ENCODE measurements at regions of chr6 and their contacts with region 1.

Region 1: GRCh38 chr6:149028767-149029405 is 282.1 kb downstream of the UST start:
- H3K4me3 ChIP-seq: no peak overlapping the region
- H3K27ac ChIP-seq: no peak overlapping the region
- H3K4me1 ChIP-seq: peaks cover 14% of the 10 kb centered on the region
- CTCF ChIP-seq: peak; percentile 19; the same call in 1 of the 2 replicates

Region 2: DNA sequence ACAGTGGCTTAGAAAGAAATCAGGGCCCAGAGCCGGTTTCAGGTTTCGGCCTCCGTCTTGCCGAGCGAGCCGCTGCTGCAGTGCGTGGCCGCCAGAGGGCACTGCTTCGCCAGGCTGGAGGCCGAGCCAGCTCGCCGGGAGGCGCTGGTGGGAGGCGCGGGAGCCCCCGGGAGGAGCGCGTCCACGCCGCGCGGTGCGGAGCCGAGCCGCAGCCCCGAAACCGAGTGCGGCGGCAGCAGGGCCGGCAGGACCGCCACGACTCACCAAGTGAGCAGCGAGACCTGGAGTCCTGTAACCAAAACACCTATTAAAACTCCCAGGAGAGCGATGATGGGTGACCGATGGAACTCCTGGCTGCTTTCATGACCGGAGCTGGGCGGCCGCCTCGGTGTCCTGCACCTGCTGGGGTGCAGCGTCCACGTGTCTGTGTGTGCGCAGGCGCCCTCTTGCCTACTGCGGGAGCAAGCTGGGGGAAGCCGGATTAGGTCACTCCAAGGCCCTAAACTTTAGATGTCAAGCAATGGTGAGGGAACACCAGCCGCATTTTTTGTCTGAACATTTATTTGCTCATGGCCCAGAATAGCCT is 468.9 kb before region 1 on chr6:
- CTCF ChIA-PET with region 1: interaction called, 43 read pairs
- POLR2A ChIA-PET with region 1: no interaction called
- H3K4me3 ChIP-seq: peak overlapping the region; percentile 49
- H3K27ac ChIP-seq: peak overlapping the region; percentile 29; the same call in 1 of the 2 replicates
- H3K4me1 ChIP-seq: no peaks in the 10 kb centered on the region
- CTCF ChIP-seq: peak; percentile 69

Region 3: DNA sequence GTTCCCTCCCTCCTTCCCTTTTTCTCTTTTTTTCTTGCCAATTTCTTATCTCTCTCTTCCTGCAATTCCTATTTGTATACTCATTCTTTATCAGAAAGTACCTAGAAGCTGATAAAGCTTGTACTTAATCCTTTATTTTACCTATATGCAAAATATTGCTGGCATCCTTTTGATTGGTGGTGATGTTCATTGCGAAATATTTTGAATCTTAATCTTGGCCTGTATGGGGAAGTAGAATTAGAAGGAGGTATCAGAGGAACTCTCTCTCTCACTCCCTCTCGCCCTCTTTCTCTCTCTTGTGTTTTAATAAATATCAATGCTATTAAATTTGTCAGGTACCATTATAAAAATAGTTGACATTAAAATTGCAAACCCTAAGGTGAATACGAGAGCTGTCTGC is 229.2 kb before region 1 on chr6:
- CTCF ChIA-PET with region 1: no interaction called
- POLR2A ChIA-PET with region 1: no interaction called
- H3K4me3 ChIP-seq: no peak overlapping the region
- H3K27ac ChIP-seq: no peak overlapping the region
- H3K4me1 ChIP-seq: peaks cover 3% of the 10 kb centered on the region; the same call in 1 of the 2 replicates
- CTCF ChIP-seq: no peak

Region 4: GRCh38 chr6:148965287-148965686 is 63.6 kb before region 1 on chr6:
- CTCF ChIA-PET with region 1: no interaction called
- POLR2A ChIA-PET with region 1: no interaction called
- H3K4me3 ChIP-seq: no peak overlapping the region
- H3K27ac ChIP-seq: no peak overlapping the region
- H3K4me1 ChIP-seq: peaks cover 10% of the 10 kb centered on the region
- CTCF ChIP-seq: no peak

Region 5: DNA sequence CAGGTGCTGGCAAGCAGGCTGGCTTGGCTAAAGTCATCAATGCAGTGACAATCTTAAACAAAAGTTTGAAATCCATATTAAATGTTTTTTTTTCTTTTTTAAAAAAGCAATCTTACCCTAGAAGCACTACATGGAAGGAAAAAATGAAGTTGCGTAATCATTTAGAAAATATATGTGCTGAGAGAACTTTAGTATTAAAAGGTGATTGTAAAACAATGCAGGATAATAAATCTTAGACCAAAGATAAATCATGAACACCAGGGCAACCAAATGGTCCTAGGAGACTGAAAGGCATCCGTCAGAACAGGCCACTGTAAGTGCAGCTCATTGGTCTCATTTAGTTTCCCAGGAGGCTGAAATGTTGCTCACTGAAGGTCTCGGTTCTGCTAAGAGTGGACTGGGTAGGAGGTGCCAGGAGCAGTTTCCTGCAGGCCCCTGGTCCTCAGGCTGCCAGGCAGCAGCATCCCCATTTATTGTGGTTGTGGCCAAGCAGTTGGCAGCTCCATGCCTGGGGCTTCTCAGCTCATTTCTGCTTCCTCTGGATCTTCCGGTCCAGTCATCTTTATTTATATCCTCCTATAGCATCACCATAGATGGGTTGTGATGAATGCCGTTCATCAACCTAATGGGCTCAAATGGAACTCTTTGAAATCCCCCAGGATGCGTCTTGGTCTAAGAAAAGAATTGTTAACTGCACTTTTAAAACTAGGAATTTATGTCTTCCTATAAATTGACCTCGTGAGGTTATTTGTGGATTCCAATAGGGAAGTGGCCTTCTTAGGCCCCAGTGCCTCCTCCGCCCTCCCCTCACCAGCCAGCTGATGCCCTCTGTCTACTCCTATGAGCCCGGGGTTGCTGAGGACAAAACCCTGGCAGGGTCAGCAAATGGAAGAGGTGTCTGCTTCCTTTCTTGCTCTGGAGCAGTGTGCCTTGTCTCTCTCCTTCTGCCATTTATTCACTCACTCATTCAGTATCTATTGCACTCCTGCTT is 13.1 kb before region 1 on chr6:
- CTCF ChIA-PET with region 1: interaction called, 20 read pairs
- POLR2A ChIA-PET with region 1: no interaction called
- H3K4me3 ChIP-seq: no peak overlapping the region
- H3K27ac ChIP-seq: no peak overlapping the region
- H3K4me1 ChIP-seq: no peaks in the 10 kb centered on the region
- CTCF ChIP-seq: no peak

Region 6: DNA sequence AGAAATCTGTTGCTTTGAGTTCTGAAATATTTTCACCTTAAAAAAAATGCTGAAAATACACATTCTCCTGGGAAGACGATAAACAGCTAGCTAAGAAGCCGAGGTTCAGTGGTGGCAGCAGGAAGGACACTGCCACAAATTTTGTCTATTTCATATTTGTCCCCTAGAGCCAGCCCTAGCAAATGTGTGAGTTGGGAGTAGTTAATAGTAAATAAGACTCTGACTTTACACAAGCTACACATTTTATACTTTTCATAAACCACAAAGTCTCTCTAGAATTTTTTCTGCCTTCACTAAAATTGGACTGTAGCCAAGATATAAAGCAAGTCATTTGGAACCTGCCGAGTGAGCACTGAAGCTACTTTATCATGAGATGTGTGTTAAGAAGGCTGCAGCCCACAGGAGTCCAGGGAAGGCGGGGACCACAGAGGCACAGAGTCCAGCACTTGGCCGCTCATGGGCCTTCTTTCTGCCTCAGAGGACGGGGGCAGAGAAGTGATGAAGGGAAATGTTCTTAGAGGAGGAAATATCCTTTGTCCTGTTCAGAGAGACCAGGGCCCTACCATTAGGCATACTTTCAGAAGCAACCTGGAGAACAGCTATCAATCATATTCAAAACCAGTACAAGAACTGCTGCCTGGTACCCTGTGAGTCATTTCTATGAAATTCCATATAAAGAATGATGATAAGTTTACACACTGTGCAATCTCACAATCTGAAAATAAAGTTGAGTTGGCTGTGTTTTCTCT is 46.9 kb after region 1 on chr6:
- CTCF ChIA-PET with region 1: interaction called, 14 read pairs
- POLR2A ChIA-PET with region 1: no interaction called
- H3K4me3 ChIP-seq: no peak overlapping the region
- H3K27ac ChIP-seq: peak overlapping the region; percentile 28
- H3K4me1 ChIP-seq: peaks cover 32% of the 10 kb centered on the region
- CTCF ChIP-seq: no peak

Region 7: GRCh38 chr6:149513915-149514314 is 485.0 kb after region 1 on chr6:
- CTCF ChIA-PET with region 1: interaction called, 54 read pairs
- POLR2A ChIA-PET with region 1: no interaction called
- H3K4me3 ChIP-seq: no peak overlapping the region
- H3K27ac ChIP-seq: no peak overlapping the region
- H3K4me1 ChIP-seq: no peaks in the 10 kb centered on the region
- CTCF ChIP-seq: no peak

Measured in HEK293 (cell line).